Activated CD8-positive, alpha-beta memory T cell treated with anti-CD3 and anti-CD28 coated beads, Interleukin-2, amount 10 ng/mL, durations not matched to agents 7 days and 5 days (primary cell): ENCODE measurements at regions of chr21 and their contacts with region 1.

Region 1: GRCh38 chr21:44742418-44743153 is 31.2 kb upstream of the TSPEAR start:
- DNase-seq: no peak
- ATAC-seq: no peak
- H3K4me3 Mint-ChIP-seq: no peak overlapping the region
- H3K27ac Mint-ChIP-seq: no peak overlapping the region
- H3K4me1 Mint-ChIP-seq: no peaks in the 10 kb centered on the region
- H3K27me3 Mint-ChIP-seq: peaks cover 14% of the 10 kb centered on the region

Region 2: DNA sequence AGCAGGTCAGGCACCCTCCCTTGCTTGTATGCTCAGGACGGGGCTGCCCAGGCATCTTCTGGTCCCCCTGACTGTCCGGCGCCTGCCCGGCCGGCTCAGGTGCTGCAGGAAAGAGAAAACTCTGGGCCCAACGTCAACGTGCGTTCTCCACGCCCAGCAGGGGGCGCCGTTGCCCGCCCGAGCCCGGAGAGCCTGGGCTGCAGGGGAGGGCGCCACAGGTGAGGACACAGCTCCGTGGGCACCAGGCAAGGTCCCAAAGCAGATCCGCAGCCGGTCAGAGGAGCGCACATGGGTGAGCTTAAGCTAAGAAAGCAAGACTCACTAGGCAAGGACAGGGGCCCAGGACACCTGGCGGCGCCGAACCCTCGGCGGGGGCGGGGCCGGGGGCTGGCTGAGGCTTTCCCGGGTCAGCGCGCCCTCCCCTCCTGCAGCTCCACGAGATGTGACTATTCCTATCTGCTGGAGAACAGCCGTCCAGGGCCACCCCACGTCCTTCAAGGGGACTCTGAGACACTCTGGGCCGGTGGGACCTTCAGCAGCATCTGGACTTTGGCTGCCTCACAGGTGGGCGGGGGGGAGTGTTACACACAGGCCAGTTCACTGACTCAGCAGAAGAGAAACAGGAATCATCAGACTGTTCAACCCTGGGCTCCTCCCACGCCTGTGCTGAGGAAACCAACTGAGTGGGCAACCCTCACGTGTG is 231.9 kb before region 1 on chr21:
- CTCF ChIA-PET with region 1: interaction called, 47 read pairs
- DNase-seq: peak; percentile 80
- ATAC-seq: peak; percentile 89
- H3K4me3 Mint-ChIP-seq: no peak overlapping the region
- H3K27ac Mint-ChIP-seq: no peak overlapping the region
- H3K4me1 Mint-ChIP-seq: peaks cover 9% of the 10 kb centered on the region
- H3K27me3 Mint-ChIP-seq: no peaks in the 10 kb centered on the region

Region 3: GRCh38 chr21:44709426-44710293 is 32.9 kb before region 1 on chr21:
- CTCF ChIA-PET with region 1: no interaction called
- DNase-seq: no peak
- ATAC-seq: peak; percentile 27
- H3K4me3 Mint-ChIP-seq: no peak overlapping the region
- H3K27ac Mint-ChIP-seq: no peak overlapping the region
- H3K4me1 Mint-ChIP-seq: peaks cover 3% of the 10 kb centered on the region
- H3K27me3 Mint-ChIP-seq: peaks cover 91% of the 10 kb centered on the region

Region 4: GRCh38 chr21:44720170-44720569 is 22.4 kb before region 1 on chr21:
- CTCF ChIA-PET with region 1: no interaction called
- DNase-seq: no peak
- ATAC-seq: no peak
- H3K4me3 Mint-ChIP-seq: no peak overlapping the region
- H3K27ac Mint-ChIP-seq: no peak overlapping the region
- H3K4me1 Mint-ChIP-seq: peaks cover 4% of the 10 kb centered on the region
- H3K27me3 Mint-ChIP-seq: peaks cover 65% of the 10 kb centered on the region

Region 5: DNA sequence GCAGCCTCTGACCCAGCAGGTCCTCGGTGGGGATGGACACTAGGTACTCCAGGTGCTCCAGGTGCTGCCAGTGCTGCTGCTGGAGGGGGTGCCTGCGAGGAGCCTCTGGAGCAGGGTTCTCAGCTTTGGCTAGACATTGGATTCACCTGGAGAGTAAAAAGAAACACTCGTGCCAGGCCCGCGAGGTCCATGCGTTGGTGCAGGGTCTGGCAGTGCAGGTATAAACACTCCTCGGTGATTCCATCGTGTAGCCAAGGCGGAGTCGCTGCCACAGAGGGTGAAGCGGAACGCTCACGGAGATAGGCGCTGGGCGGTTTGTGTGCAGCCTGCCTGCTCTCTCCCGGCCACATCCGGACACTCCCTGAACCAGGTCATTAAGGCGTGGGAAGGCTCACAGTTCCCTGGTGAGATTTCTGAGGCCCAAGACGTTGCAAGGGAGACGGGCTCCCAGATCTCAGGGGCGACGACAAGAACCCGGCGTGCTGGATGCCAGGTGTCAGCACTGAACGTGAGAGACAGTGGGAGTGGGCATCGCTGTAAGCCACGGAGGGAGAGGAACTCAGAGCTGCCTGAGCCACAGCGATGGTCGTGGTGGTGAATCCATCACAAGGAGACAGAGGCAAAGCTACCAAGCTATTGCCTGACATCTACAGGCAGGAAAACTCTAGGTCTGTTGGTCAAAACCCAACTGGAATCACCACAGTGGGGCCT is 92.5 kb after region 1 on chr21:
- CTCF ChIA-PET with region 1: no interaction called
- DNase-seq: no peak
- ATAC-seq: no peak
- H3K4me3 Mint-ChIP-seq: no peak overlapping the region
- H3K27ac Mint-ChIP-seq: no peak overlapping the region
- H3K4me1 Mint-ChIP-seq: no peaks in the 10 kb centered on the region
- H3K27me3 Mint-ChIP-seq: no peaks in the 10 kb centered on the region